PC-3 (cell line): ENCODE measurements at regions of chr2 and their contacts with region 1.

Region 1: GRCh38 chr2:44981136-44982108 is 27.8 kb downstream of the SIX2 start:
- DNase-seq: peak; percentile 89
- ATAC-seq: peak; percentile 97
- H3K4me3 ChIP-seq: no peak overlapping the region
- H3K27ac ChIP-seq: no peak overlapping the region
- H3K4me1 ChIP-seq: peaks cover 6% of the 10 kb centered on the region
- H3K27me3 ChIP-seq: no peaks in the 10 kb centered on the region
- CTCF ChIP-seq: peak; percentile 92

Region 2: DNA sequence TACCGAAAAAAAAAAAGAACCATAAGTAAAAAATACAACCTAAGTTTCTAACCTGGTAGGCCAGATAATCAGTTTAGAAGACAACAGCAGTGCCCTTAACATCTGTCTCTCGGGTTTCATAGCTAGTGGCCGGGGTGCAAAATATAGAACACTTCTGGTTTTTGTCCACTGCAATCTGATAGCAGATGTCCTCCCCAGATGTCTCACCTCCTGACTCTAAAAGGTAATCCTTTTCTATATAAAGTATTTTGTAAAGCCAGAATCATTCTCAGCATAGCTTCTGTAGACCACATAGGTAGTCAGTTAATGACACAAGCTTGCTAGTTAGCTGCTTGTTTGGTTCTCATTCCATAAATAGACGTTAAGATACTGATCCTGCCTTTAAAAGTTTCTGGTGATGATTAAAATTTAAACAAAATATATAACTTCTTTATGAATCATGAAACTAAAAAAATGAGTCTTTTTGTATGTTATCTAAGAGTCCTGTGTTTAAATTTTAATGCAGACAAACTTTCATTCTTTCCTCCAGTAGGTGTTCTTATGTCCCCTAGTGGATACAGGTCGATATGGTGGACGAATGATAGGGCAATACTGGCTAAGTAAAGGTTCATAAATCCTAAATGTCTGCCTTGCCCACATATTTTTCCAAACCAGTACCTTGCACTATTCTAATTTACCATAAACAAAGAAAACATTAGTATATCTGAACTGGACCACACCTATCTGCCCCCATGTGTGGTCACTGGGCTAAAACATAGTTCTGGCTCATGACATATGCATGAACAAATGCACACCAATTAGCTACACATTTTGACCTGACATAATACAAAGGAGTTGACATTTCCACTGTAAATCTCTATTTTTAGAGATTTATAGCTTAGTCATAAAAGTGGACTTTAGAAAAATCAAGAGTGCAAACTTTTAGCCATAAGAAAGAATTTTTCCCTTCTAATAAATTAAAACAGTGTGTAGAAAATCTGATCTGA is 458.7 kb after region 1 on chr2:
- CTCF ChIA-PET with region 1: no interaction called
- POLR2A ChIA-PET with region 1: no interaction called
- intact Hi-C with region 1: loop called (anchors 5 kb)
- DNase-seq: peak; percentile 59
- ATAC-seq: peak; percentile 76
- H3K4me3 ChIP-seq: no peak overlapping the region
- H3K27ac ChIP-seq: peak overlapping the region; percentile 71
- H3K4me1 ChIP-seq: peaks cover 21% of the 10 kb centered on the region
- H3K27me3 ChIP-seq: no peaks in the 10 kb centered on the region
- CTCF ChIP-seq: peak; percentile 80

Region 3: DNA sequence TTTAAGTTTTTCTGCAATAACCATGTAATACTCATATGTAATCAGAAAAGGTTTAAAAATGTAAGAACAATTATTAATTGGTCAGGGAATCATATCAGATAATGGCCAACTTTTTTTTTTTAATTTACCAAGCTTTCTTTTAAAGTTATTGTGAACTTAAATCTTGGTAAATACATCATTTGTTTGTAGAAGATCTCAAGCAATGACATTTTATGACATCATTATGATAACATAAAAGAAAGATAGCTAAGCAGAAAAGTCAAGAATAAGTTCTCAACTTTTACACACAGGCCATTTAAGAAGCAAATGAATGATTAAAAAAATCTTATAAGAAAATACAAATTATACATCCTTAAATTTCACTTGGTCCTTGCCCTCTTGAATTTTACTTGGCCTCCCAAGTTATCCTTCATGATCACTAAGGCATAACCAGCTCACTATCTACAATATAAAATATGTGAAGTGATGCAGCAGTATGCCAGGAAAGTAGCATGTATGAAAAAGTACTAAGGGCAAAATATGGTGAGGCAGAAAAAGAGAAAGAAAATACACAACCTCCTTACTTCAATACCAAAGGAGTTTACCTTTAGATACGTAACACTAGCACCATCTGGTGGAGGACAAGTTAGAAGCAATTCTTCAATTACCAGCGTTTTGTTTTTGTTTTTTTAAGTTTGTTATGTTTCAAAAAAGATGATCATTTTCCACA is 513.0 kb after region 1 on chr2:
- CTCF ChIA-PET with region 1: interaction called, 5 read pairs
- POLR2A ChIA-PET with region 1: no interaction called
- intact Hi-C with region 1: loop called (anchors 1 kb)
- DNase-seq: peak; percentile 83
- ATAC-seq: peak; percentile 40; the same call in 1 of the 2 replicates
- H3K4me3 ChIP-seq: no peak overlapping the region
- H3K27ac ChIP-seq: peak overlapping the region; percentile 38
- H3K4me1 ChIP-seq: peaks cover 5% of the 10 kb centered on the region
- H3K27me3 ChIP-seq: no peaks in the 10 kb centered on the region
- CTCF ChIP-seq: peak; percentile 89

Region 4: DNA sequence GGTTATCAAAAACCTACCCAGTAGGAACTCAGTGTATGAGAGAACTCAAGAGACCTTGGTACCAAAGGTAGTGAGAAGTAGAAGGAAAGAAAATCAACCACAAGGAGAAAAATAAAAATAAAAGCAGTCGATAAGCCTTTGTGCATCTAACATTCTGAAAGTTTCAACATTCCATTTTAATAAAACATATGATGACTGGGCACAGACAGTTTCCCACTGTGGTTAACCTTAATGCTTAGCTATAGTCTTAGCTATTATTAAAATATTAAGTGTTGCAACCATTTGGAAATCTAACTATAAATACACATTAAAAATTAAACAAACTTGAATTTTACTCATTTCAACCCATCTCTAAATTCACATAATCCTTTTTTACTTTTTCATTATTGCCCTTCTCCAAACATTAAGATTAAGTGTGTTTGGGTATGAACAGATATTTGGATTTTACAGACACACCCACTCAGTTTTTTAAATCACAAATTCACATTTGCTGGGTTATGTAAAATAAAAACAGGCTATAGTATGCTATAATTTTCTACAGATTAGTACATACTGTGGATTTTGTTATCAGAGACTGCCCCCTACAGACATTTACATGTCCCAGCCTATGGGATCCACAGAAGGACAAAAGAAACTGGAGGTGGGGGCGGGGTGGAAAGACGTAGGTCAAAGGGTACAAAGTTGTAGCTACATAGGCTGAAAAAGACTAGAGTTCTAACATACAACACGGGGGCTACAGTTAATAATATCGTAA is 596.8 kb after region 1 on chr2:
- CTCF ChIA-PET with region 1: no interaction called
- POLR2A ChIA-PET with region 1: no interaction called
- intact Hi-C with region 1: loop called (anchors 1 kb)
- DNase-seq: peak; percentile 43
- ATAC-seq: peak; percentile 73
- H3K4me3 ChIP-seq: no peak overlapping the region
- H3K27ac ChIP-seq: no peak overlapping the region
- H3K4me1 ChIP-seq: no peaks in the 10 kb centered on the region
- H3K27me3 ChIP-seq: no peaks in the 10 kb centered on the region
- CTCF ChIP-seq: peak; percentile 65